ENCODE measurements at regions of chr9 and their contacts with region 1.

Region 1: GRCh38 chr9:96383165-96383942 is at the start of gene SLC35D2:
- DNase-seq: peak; percentile 73
- ATAC-seq: peak; percentile 93
- H3K4me3 ChIP-seq: peak within 1 kb of the TSS; percentile 63 to 87 (median 72)
- H3K27ac ChIP-seq: peak within 1 kb of the TSS; percentile 95
- H3K4me1 ChIP-seq: peaks cover 85% of the 10 kb centered on the region
- H3K27me3 ChIP-seq: no peaks in the 10 kb centered on the region; a peak in 1 of 5 replicates
- CTCF ChIP-seq: no peak
- EP300 ChIP-seq: no peak
- POLR2A ChIP-seq: peak; percentile 41 to 76; a peak in 3 of 4 replicates
- RAD21 ChIP-seq: no peak
- total RNA-seq, gene SLC35D2: 59.6 and 96.2 TPM in 2 replicates

Region 2: DNA sequence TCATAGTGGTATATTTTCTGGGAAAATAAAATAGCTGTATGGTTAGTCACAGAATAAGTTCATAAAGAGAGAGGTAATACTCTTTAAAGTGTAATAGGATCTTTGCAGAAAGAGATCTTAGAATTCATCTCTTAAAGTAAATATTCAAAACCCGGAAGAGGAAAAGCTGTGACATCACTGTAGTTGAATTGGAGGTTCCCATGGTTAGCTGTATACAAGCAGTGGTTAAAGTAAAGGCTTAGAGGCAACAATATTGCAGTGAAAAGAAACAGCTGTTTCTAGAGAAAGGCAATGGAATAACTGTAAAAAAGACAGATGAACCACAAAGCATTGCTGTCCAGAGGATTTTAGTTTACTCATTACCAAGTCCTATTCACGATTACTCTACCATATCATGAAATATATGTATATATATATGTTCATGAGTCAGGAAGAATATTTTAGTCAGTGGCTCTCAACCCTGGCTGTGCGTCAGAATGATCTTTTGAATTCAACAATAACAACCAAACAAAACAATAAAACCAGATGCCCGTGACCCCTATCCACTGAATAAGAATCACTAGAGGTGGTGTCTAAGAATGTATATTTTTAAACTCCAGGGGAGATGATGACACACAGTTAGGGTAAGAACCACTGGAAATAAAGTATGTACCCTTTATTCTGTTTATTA is 503.2 kb before region 1 on chr9:
- CTCF ChIA-PET with region 1: no interaction called
- POLR2A ChIA-PET with region 1: no interaction called
- in situ Hi-C with region 1: no loop called
- intact Hi-C with region 1: no loop called
- DNase-seq: no peak
- ATAC-seq: no peak
- H3K4me3 ChIP-seq: no peak overlapping the region
- H3K27ac ChIP-seq: no peak overlapping the region
- H3K4me1 ChIP-seq: 0 out of 2 replicates have a peak, but pooled peaks cover 9% of the 10 kb centered on the region
- H3K27me3 ChIP-seq: no peaks in the 10 kb centered on the region; a peak in 1 of 5 replicates
- CTCF ChIP-seq: no peak
- EP300 ChIP-seq: no peak
- POLR2A ChIP-seq: no peak
- RAD21 ChIP-seq: no peak

Region 3: GRCh38 chr9:96418074-96418809 is 34.9 kb after region 1 on chr9 and contains the start of gene ZNF367:
- CTCF ChIA-PET with region 1: no interaction called
- POLR2A ChIA-PET with region 1: interaction called, 7 read pairs
- in situ Hi-C with region 1: no loop called
- intact Hi-C with region 1: loop called (anchors 2 kb)
- DNase-seq: peak; percentile 95
- ATAC-seq: peak; percentile 81
- H3K4me3 ChIP-seq: peak within 1 kb of the TSS; percentile 84 to 89 (median 88)
- H3K27ac ChIP-seq: peak within 1 kb of the TSS; percentile 99
- H3K4me1 ChIP-seq: peaks cover 58% of the 10 kb centered on the region
- H3K27me3 ChIP-seq: no peaks in the 10 kb centered on the region; a peak in 1 of 5 replicates
- CTCF ChIP-seq: no peak
- EP300 ChIP-seq: no peak; a peak in 1 of 4 replicates
- POLR2A ChIP-seq: peak; percentile 67
- RAD21 ChIP-seq: peak; percentile 20; the same call in 1 of the 2 replicates
- total RNA-seq, gene ZNF367: 7.7 and 8.1 TPM in 2 replicates

Region 4: GRCh38 chr9:96460882-96461281 is 77.5 kb after region 1 on chr9:
- CTCF ChIA-PET with region 1: no interaction called
- POLR2A ChIA-PET with region 1: no interaction called
- in situ Hi-C with region 1: no loop called
- intact Hi-C with region 1: no loop called
- DNase-seq: no peak
- ATAC-seq: no peak
- H3K4me3 ChIP-seq: no peak overlapping the region
- H3K27ac ChIP-seq: no peak overlapping the region
- H3K4me1 ChIP-seq: peaks cover 10% of the 10 kb centered on the region; the same call in 1 of the 2 replicates
- H3K27me3 ChIP-seq: no peaks in the 10 kb centered on the region
- CTCF ChIP-seq: no peak
- EP300 ChIP-seq: no peak
- POLR2A ChIP-seq: no peak
- RAD21 ChIP-seq: no peak